Lower leg skin (tissue), 4 donors: ENCODE measurements at regions of chr21 and their contacts with region 1.

Region 1: DNA sequence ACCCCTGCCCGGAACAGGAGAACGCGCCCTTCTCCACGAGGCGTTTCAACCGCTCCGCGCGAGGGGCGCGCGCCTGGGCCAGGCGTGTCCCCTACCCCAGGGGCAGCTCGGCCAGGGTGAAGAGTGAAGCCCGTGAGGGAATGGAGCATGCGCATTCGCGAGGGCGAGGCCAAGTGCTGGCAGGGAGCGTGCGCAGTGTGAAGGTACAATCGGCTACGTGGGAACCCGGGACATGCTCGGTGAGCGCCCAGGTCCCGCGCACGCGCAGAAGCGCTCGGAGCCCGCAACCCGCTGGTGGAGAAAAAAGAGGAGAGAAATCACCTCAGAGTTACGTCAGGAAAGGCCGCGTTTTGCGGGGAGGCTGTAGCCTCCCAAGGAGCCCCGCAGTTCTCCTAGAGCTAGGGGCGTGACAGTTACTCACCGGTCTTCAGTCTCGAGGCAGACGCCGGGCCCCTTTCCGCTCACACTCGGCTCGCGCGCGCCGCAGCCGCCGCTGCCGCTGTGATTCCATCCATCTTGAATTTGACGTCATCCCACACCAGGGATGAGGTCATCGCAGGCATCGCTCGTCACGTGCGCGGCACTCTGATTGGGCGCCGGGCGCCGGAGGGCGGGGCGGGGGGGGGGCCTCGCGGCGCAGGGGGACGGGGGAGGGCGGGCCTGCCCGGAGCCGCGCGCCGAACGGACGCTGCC is at the start of gene ZBTB21:
- DNase-seq: peak; percentile 98 to 100
- H3K4me3 ChIP-seq: peak within 1 kb of the TSS; percentile 63
- CTCF ChIP-seq: no peak
- POLR2A ChIP-seq: peak in 1 of 2 donors; percentile 57
- total RNA-seq, gene ZBTB21: 18.1 to 31.9 (median 28.2) TPM

Region 2: GRCh38 chr21:40936771-40937261 is 1073.2 kb before region 1 on chr21:
- intact Hi-C with region 1: no loop called
- DNase-seq: no peak
- H3K4me3 ChIP-seq: no peak overlapping the region
- CTCF ChIP-seq: no peak
- POLR2A ChIP-seq: no peak

Region 3: DNA sequence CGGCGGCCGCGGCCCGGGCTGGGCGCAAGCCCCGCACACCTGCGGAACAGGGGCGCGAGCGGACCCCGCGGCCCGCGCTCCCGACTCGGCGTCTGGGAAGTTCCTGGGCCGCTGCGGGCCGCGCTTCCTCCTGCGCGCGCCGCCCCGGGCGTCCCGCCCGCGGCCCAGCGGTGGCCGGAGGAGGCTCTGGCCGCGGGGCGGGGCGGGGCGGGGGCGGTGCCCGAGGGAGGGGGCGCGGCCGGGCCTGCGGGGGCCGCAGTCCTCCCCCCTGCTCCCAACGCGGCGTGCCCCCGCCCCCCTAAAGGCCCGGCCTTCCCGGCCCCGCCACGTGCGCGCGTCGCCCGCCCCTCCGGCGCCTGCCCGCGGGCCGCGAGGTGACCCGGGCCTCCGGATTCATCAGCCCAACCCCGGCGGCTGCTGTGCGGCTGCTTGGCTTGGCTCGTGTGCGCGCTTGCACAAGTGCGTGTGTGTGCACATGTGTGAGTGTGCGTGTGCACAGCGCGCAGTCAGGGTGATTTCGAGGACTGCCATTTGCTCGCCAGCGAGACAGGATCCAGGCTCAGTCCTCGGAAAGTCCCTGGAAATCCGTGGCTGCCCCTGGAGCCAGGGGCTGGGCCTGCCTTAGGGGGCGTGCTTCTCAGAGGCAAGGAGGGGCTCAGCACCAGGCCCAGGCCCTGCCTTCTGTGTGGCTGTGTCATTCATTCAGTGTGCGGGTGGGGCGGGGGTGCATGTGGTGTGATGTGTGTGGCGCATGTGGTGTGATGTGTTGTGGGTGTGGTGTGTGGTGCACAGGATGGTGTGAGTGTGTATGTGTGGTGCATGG is 55.9 kb before region 1 on chr21 and contains the start of gene C2CD2:
- intact Hi-C with region 1: loop called (anchors 10 kb)
- DNase-seq: no peak
- H3K4me3 ChIP-seq: peak within 1 kb of the TSS; percentile 41
- CTCF ChIP-seq: no peak
- POLR2A ChIP-seq: no peak
- total RNA-seq, gene C2CD2: 39.4 to 79.5 (median 49.4) TPM